ENCODE measurements at regions of chr6 and their contacts with region 1.

Region 1: DNA sequence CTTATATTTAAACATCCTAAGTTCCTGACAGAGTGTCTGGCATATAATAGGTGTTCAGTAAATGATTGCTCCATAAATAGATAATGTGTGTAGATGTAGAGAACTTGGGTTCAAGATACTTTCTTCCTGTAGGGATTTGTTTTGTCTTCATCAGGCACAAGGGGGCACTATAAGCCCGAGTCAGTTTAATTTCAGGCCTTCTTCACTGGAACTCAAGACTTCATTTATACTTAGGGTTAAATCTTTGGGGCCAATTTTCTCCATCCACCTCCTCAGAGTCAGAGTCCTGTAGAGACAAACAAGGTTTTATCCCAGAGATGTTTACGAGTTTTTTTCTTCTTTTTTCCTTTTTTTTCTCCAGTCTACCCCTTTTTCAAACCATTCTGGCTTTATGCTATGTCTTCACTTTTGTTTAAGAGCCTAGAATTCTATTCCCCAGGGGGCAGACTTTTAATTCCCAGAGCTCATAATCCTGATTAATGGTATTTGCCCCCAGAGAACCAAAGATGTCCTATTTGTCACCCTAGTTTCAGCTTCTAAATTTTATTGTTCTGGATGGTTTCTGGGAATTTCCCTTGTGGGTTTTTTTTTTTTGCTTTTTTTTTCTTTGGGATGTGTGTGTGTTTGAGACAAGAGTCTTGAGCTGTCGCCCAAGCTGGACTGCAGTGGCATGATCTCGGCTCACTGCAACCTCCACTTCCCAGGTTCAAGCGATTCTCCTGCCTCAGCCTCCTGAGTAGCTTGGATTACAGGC is 88.4 kb downstream of the HFE start:
- DNase-seq: no peak
- ATAC-seq: no peak
- H3K4me3 Mint-ChIP-seq: peak overlapping the region; percentile 54
- H3K27ac Mint-ChIP-seq: peak overlapping the region; percentile 76
- H3K4me1 Mint-ChIP-seq: peaks cover 41% of the 10 kb centered on the region
- H3K27me3 Mint-ChIP-seq: no peaks in the 10 kb centered on the region

Region 2: DNA sequence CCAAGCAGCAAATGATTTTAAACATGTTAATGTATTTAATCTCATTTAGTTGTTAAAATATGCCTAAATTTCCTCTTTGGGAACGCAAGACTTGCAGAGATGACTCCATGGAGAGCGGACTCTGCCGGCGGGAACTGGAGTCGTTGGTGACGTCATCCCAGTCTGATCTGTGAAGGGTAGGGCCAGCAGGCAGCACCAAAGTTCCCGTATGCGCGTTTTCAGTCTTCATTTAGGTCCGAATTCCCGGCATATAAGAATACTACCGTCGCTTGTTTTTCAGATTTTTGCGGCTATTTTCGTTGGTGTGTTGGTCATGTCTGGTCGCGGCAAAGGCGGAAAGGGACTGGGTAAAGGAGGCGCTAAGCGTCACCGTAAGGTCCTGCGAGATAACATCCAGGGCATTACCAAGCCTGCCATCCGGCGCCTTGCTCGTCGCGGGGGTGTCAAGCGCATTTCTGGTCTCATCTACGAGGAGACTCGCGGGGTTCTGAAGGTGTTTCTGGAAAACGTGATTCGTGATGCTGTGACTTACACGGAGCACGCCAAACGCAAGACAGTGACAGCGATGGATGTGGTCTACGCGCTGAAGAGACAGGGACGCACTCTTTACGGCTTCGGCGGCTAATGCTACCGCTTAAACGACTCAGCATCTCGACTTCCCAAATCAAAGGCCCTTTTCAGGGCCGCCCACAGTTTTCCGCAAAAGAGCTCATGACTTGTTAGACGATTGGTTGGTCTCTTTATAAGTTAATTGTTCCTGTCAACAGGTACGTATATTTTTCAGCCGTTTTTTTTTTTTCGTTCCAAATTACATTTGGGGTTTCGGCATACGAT is 28.9 kb after region 1 on chr6:
- POLR2A ChIA-PET with region 1: interaction called, 208 read pairs
- DNase-seq: peak; percentile 84
- ATAC-seq: peak; percentile 64
- H3K4me3 Mint-ChIP-seq: no peak overlapping the region
- H3K27ac Mint-ChIP-seq: no peak overlapping the region
- H3K4me1 Mint-ChIP-seq: peaks cover 34% of the 10 kb centered on the region
- H3K27me3 Mint-ChIP-seq: no peaks in the 10 kb centered on the region